PC-3 (cell line): ENCODE measurements at regions of chr20 and their contacts with region 1.

Region 1: GRCh38 chr20:46167080-46167479 is 49.0 kb downstream of the CD40 start:
- DNase-seq: no peak
- ATAC-seq: no peak
- H3K4me3 ChIP-seq: no peak overlapping the region
- H3K27ac ChIP-seq: no peak overlapping the region
- H3K4me1 ChIP-seq: no peaks in the 10 kb centered on the region
- H3K27me3 ChIP-seq: peaks cover 78% of the 10 kb centered on the region
- CTCF ChIP-seq: no peak

Region 2: DNA sequence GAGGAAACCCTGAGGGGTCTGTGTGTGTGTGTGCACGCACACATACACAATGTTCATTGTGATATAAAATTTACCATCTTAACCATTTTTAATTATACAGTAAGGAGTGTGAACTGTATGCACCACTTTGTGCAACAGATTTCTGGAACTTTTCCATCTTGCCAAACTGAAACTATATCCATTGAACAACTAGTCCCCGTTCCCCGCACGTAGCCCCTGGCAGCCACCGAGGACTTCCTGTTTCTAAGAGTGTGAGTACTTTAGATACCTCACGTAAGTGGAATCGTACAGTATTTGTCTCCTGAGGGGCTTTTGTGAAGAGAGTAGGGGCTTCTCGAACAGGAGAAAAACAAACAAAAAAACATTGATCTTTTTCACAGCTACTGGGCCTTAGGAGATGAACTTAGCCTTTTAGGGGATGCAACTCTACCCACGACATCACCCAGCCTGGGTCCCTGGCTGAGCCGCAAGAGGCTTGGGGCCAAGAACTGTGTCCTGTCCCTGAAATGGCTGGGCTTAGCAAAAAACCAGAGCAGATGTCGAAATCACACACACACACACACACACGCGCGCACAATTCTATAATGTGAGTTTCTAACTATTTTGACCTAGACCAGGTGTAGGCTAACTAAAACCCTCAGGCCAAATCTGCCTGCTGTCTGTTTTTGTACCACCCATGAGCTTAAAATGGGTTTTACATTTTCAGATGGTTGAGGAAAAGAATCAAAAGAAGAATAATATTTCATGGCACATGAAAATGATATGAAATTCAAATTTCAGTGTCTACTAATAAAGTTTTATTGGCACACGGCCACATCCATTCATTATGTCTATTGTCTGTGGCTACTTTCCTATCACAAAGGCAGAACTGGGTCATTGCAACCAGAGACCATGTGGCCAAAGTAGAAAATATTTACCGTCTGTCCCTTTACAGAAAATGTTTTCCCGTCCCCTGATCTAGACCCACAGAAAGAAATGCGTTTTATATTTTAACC is 871.8 kb after region 1 on chr20:
- CTCF ChIA-PET with region 1: no interaction called
- POLR2A ChIA-PET with region 1: interaction called, 14 read pairs
- intact Hi-C with region 1: no loop called
- DNase-seq: no peak
- ATAC-seq: no peak
- H3K4me3 ChIP-seq: no peak overlapping the region
- H3K27ac ChIP-seq: no peak overlapping the region
- H3K4me1 ChIP-seq: 0 out of 2 replicates have a peak, but pooled peaks cover 3% of the 10 kb centered on the region
- H3K27me3 ChIP-seq: peaks cover 18% of the 10 kb centered on the region
- CTCF ChIP-seq: no peak